ENCODE measurements at regions of chr2 and their contacts with region 1.

Region 1: GRCh38 chr2:218568190-218569037 is at the starts of genes CNOT9 and USP37:
- DNase-seq: peak; percentile 100
- ATAC-seq: peak; percentile 92
- H3K4me3 Mint-ChIP-seq: peak within 1 kb of the TSS; percentile 97
- H3K27ac Mint-ChIP-seq: peak within 1 kb of the TSS; percentile 99
- H3K4me1 Mint-ChIP-seq: peaks cover 45% of the 10 kb centered on the region
- H3K27me3 Mint-ChIP-seq: no peaks in the 10 kb centered on the region
- CTCF ChIP-seq: no peak
- total RNA-seq, gene CNOT9: 60.5 and 74.4 TPM in 2 replicates
- total RNA-seq, gene USP37: 14.3 and 23.1 TPM in 2 replicates

Region 2: GRCh38 chr2:218257390-218257981 is 310.9 kb before region 1 on chr2:
- CTCF ChIA-PET with region 1: no interaction called
- POLR2A ChIA-PET with region 1: no interaction called
- intact Hi-C with region 1: loop called (anchors 1 kb)
- DNase-seq: peak; percentile 67
- ATAC-seq: peak; percentile 89
- H3K4me3 Mint-ChIP-seq: peak overlapping the region; percentile 73
- H3K27ac Mint-ChIP-seq: peak overlapping the region; percentile 92
- H3K4me1 Mint-ChIP-seq: peaks cover 70% of the 10 kb centered on the region
- H3K27me3 Mint-ChIP-seq: no peaks in the 10 kb centered on the region
- CTCF ChIP-seq: no peak

Region 3: DNA sequence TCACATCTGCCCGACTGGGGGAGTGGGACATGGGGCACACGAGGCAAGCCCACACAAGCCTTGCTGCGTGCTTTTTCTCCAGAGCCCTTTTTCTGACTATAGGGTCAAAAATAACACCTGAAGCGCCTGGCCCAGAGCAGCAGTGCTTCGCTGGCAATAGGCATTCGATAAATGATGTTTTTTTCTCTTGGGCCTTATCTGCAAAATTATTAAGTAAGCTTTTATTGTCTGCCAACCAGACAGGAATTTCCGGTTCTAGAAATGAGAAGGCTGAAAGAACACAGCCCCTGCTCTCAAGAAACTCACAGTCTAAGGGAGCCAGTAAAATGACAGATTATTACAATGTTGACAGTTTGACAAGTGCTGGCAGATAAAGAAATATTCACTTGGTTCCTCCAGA is 273.4 kb before region 1 on chr2:
- CTCF ChIA-PET with region 1: no interaction called
- POLR2A ChIA-PET with region 1: no interaction called
- intact Hi-C with region 1: no loop called
- DNase-seq: no peak
- ATAC-seq: no peak
- H3K4me3 Mint-ChIP-seq: no peak overlapping the region
- H3K27ac Mint-ChIP-seq: no peak overlapping the region
- H3K4me1 Mint-ChIP-seq: peaks cover 51% of the 10 kb centered on the region
- H3K27me3 Mint-ChIP-seq: no peaks in the 10 kb centered on the region
- CTCF ChIP-seq: no peak

Region 4: DNA sequence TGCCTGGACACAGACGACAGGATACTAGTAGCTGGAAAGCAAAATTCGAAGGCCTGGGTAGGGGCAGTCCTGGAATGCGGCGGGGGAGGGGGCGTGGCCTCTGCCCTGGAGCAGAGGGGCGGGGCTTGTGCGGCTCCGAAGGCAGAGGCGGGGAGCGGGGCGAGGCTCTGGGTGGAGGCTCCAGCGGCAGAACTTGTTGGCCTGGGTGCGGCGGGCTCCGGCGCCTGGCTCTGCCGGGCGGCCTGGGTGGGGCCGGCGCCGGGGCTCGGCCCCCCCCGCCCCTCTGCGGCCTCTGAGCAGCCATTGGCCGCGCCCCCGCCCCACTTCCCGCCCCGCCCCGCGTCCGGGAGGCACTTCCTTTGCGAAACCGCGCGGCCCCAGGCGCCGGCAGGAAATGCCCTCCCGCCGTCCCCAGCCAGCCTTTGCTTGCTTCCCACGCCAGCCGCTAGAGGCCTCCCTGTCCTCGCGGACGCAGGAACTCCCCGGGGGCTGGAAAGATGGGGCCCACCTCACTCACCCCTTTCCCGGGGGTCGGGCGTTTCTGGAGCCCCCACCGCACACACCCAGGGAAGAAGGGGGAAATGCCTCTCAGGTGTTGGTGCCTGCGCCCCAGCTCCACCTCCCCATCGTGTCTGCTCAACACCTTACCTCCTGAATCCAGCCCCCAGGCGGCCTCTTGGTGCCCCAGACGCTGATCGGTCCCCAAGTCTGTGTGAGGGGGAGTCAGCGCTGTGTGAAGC is 162.0 kb before region 1 on chr2:
- CTCF ChIA-PET with region 1: no interaction called
- POLR2A ChIA-PET with region 1: no interaction called
- intact Hi-C with region 1: loop called (anchors 1 kb)
- DNase-seq: peak; percentile 89
- ATAC-seq: peak; percentile 83
- H3K4me3 Mint-ChIP-seq: peak overlapping the region; percentile 85
- H3K27ac Mint-ChIP-seq: peak overlapping the region; percentile 86
- H3K4me1 Mint-ChIP-seq: peaks cover 54% of the 10 kb centered on the region
- H3K27me3 Mint-ChIP-seq: no peaks in the 10 kb centered on the region
- CTCF ChIP-seq: no peak

Region 5: GRCh38 chr2:218671654-218672566 is 103.5 kb after region 1 on chr2 and contains the starts of genes RNF25 and STK36:
- CTCF ChIA-PET with region 1: no interaction called
- POLR2A ChIA-PET with region 1: no interaction called
- intact Hi-C with region 1: loop called (anchors 1 kb)
- DNase-seq: peak; percentile 66
- ATAC-seq: peak; percentile 95
- H3K4me3 Mint-ChIP-seq: peak within 1 kb of the TSS; percentile 99
- H3K27ac Mint-ChIP-seq: peak within 1 kb of the TSS; percentile 97
- H3K4me1 Mint-ChIP-seq: peaks cover 21% of the 10 kb centered on the region
- H3K27me3 Mint-ChIP-seq: no peaks in the 10 kb centered on the region
- CTCF ChIP-seq: no peak
- total RNA-seq, gene RNF25: 29.7 and 35.1 TPM in 2 replicates
- total RNA-seq, gene STK36: 24.2 and 29.2 TPM in 2 replicates

Region 6: GRCh38 chr2:218820746-218821369 is 252.4 kb after region 1 on chr2:
- CTCF ChIA-PET with region 1: no interaction called
- POLR2A ChIA-PET with region 1: no interaction called
- intact Hi-C with region 1: no loop called
- DNase-seq: no peak
- ATAC-seq: no peak
- H3K4me3 Mint-ChIP-seq: no peak overlapping the region
- H3K27ac Mint-ChIP-seq: no peak overlapping the region
- H3K4me1 Mint-ChIP-seq: no peaks in the 10 kb centered on the region
- H3K27me3 Mint-ChIP-seq: peaks cover 8% of the 10 kb centered on the region
- CTCF ChIP-seq: no peak

Region 7: DNA sequence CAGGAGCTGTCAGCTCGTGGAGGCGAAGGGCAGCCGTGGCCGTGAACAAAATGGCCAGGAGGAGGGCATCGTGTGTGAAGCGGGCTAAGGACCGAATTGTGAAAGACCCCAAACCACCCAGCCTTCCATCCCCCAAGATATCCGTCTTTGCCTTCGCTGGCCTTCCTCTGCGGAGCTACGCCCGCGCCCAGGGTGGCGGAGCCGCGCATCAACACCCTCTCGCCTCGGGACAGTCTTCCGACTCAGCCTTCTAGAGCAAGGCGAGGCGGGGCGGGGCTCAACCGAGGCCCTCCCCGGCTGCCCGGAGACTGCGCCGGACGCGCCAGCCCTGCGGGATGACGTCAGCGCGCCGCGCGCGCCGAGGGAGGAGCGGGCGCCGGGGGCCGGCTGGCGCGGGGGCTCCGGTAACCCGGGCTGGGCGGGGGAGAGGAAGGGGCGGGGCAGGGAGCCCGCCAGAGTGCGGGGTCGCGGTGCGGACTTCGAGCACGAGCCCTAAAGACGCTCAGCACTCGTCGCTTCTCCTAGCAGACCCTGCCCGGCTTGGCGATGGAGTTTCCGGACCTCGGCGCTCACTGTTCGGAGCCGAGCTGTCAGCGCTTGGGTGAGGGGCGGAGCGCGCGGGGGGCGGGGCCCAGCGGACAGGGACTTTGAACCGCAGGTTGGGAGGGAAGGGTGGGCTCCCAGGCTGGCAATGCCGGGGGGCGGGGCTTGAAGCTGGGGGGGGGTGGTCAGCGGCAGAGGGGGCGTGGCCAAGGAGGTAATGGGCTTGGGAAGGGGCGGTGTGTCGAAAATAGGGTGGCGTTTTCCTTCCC is 638.2 kb after region 1 on chr2 and contains the start of gene ZFAND2B:
- CTCF ChIA-PET with region 1: no interaction called
- POLR2A ChIA-PET with region 1: no interaction called
- intact Hi-C with region 1: loop called (anchors 2 kb)
- DNase-seq: peak; percentile 99
- ATAC-seq: peak; percentile 93
- H3K4me3 Mint-ChIP-seq: peak within 1 kb of the TSS; percentile 88
- H3K27ac Mint-ChIP-seq: peak within 1 kb of the TSS; percentile 95
- H3K4me1 Mint-ChIP-seq: peaks cover 26% of the 10 kb centered on the region
- H3K27me3 Mint-ChIP-seq: no peaks in the 10 kb centered on the region
- CTCF ChIP-seq: no peak
- total RNA-seq, gene ZFAND2B: 39.9 and 47.2 TPM in 2 replicates